ENCODE measurements at regions of chr5 and their contacts with region 1.

Region 1: DNA sequence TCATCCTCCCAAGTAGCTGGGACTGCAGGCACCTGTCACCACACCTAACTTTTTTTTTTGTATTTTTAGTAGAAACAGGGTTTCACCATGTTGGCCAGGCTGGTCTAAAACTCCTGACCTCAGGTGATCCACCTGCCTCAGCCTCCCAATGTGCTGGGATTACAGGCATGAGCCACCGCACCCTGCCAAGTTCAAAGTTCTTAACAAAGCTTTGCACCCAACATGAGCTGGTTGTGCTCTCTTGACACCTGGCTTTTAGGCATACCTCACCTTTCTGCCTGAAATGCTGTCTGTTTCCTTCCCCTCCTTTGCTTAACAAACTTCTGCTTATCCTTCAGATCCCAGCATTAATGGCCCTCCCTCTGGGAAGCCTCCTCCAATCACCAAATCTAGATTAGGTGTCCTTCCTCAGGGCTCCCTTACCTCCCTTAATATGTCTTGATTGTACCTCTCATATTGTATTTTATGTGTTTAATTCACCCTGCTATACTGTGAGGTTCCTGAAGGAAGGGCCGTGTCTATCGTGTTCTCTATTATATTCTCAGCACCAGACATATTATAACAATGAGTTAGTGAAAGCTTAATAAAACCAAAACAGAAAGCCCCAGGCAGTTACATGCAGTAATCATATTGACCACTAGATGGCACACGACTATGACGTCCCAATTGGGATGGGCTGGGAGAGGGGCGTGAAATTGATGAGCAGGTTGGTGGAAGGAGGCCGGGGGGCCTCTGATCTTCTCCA is 62.9 kb upstream of the PPARGC1B start:
- DNase-seq: peak; percentile 38
- ATAC-seq: peak; percentile 90
- H3K4me3 ChIP-seq: no peak overlapping the region
- H3K27ac ChIP-seq: no peak overlapping the region
- H3K4me1 ChIP-seq: no peaks in the 10 kb centered on the region
- H3K27me3 ChIP-seq: no peaks in the 10 kb centered on the region; a peak in 1 of 4 replicates
- CTCF ChIP-seq: peak; percentile 74 to 95 (median 83)
- EP300 ChIP-seq: no peak
- POLR2A ChIP-seq: no peak
- RAD21 ChIP-seq: peak; percentile 75

Region 2: GRCh38 chr5:147835386-147835798 is 1831.9 kb before region 1 on chr5:
- CTCF ChIA-PET with region 1: no interaction called
- POLR2A ChIA-PET with region 1: no interaction called
- RAD21 ChIA-PET with region 1: no interaction called
- SMC1A ChIA-PET with region 1: no interaction called
- in situ Hi-C with region 1: no loop called
- intact Hi-C with region 1: no loop called
- DNase-seq: no peak
- ATAC-seq: no peak
- H3K4me3 ChIP-seq: no peak overlapping the region
- H3K27ac ChIP-seq: no peak overlapping the region
- H3K4me1 ChIP-seq: no peaks in the 10 kb centered on the region
- H3K27me3 ChIP-seq: no peaks in the 10 kb centered on the region; a peak in 1 of 4 replicates
- CTCF ChIP-seq: no peak
- EP300 ChIP-seq: no peak
- POLR2A ChIP-seq: no peak
- RAD21 ChIP-seq: no peak

Region 3: GRCh38 chr5:149680810-149681221 is 13.6 kb after region 1 on chr5:
- CTCF ChIA-PET with region 1: interaction called, 65 read pairs
- POLR2A ChIA-PET with region 1: interaction called, 3 read pairs
- RAD21 ChIA-PET with region 1: interaction called, 14 read pairs
- SMC1A ChIA-PET with region 1: interaction called, 32 read pairs
- in situ Hi-C with region 1: no loop called
- intact Hi-C with region 1: no loop called
- DNase-seq: peak; percentile 84
- ATAC-seq: peak; percentile 99
- H3K4me3 ChIP-seq: no peak overlapping the region
- H3K27ac ChIP-seq: peak overlapping the region; percentile 45
- H3K4me1 ChIP-seq: peaks cover 28% of the 10 kb centered on the region
- H3K27me3 ChIP-seq: peaks cover 0 to under 1% of the 10 kb centered on the region in 2 experiments; a peak in 1 of 4 replicates
- CTCF ChIP-seq: no peak
- EP300 ChIP-seq: peak; percentile 32 to 90; a peak in 3 of 4 replicates
- POLR2A ChIP-seq: no peak
- RAD21 ChIP-seq: no peak

Region 4: GRCh38 chr5:149749481-149750365 is 82.5 kb after region 1 on chr5:
- CTCF ChIA-PET with region 1: interaction called, 25 read pairs
- POLR2A ChIA-PET with region 1: interaction called, 4 read pairs
- RAD21 ChIA-PET with region 1: no interaction called
- SMC1A ChIA-PET with region 1: interaction called, 5 read pairs
- in situ Hi-C with region 1: no loop called
- intact Hi-C with region 1: no loop called
- DNase-seq: no peak
- ATAC-seq: no peak
- H3K4me3 ChIP-seq: no peak overlapping the region
- H3K27ac ChIP-seq: no peak overlapping the region
- H3K4me1 ChIP-seq: peaks cover 14% of the 10 kb centered on the region
- H3K27me3 ChIP-seq: no peaks in the 10 kb centered on the region
- CTCF ChIP-seq: no peak
- EP300 ChIP-seq: no peak
- POLR2A ChIP-seq: no peak
- RAD21 ChIP-seq: no peak

Region 5: DNA sequence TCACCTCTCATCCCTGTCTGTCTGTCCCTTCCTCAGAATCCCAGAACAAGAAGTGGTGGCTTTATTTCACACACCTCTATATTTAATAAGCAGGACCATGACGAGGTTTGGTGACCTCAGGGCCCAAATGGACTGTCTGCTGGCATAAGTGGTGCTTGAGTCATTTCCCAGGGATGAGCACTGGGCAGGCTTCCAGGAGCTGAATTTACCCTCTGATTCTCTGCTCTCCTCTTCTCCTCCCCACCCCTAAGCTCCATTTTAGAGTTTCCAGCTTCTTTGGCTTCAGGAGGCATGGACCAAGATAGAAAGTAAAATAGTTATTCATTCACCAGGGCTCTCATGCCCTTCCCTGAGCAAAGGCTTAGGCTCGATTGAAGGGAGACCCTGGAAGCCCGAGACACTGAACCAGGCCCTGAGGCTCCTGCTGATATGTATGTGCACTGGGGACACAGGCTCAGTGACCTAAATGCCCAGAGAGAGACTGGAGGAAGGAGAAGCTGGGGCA is 131.9 kb after region 1 on chr5:
- CTCF ChIA-PET with region 1: interaction called, 5 read pairs
- POLR2A ChIA-PET with region 1: no interaction called
- RAD21 ChIA-PET with region 1: interaction called, 26 read pairs
- SMC1A ChIA-PET with region 1: interaction called, 29 read pairs
- in situ Hi-C with region 1: no loop called
- intact Hi-C with region 1: no loop called
- DNase-seq: no peak
- ATAC-seq: no peak
- H3K4me3 ChIP-seq: no peak overlapping the region
- H3K27ac ChIP-seq: peak overlapping the region; percentile 18; the same call in 1 of the 2 replicates
- H3K4me1 ChIP-seq: peaks cover 31% of the 10 kb centered on the region
- H3K27me3 ChIP-seq: no peaks in the 10 kb centered on the region
- CTCF ChIP-seq: no peak
- EP300 ChIP-seq: no peak
- POLR2A ChIP-seq: no peak
- RAD21 ChIP-seq: no peak

Region 6: DNA sequence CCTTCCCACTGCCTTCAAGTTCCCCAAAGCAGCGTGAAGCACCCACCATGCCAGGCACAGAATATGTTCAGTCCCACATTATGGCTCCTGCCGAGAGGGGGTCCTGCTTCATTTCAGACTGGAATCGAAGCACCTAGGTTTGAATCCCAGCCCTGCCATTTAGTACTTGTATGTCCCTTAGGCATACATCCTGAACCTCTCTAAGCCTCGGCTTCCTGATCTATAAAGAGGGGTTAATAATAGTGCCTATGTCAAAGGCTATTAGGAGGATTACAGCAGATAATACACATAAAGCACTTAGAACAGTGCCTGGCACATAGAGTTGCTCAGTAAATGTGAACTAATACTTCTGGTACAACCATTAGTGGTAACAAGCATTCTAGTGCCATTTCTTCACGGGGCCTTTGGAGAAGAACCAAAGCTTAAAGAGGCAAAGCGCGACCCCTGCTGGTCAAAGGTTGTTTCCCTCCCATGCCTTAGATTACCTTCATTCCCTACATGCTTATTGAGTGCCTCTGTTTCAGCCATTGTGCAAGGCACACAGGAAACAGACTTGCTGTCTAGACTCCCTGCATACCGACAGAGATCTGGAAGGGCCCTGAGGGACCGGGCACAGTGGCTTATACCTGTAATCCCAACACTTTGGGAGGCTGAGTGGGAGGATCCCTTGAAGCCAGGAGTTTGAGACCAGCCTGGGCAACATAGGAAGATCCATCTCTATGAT is 161.1 kb after region 1 on chr5:
- CTCF ChIA-PET with region 1: interaction called, 349 read pairs
- POLR2A ChIA-PET with region 1: interaction called, 18 read pairs
- RAD21 ChIA-PET with region 1: interaction called, 91 read pairs
- SMC1A ChIA-PET with region 1: interaction called, 210 read pairs
- in situ Hi-C with region 1: loop called (anchors 5 kb)
- intact Hi-C with region 1: loop called (anchors 1 kb)
- DNase-seq: peak; percentile 79
- ATAC-seq: peak; percentile 84
- H3K4me3 ChIP-seq: no peak overlapping the region
- H3K27ac ChIP-seq: no peak overlapping the region
- H3K4me1 ChIP-seq: peaks cover 8% of the 10 kb centered on the region
- H3K27me3 ChIP-seq: no peaks in the 10 kb centered on the region
- CTCF ChIP-seq: peak; percentile 78 to 89 (median 83)
- EP300 ChIP-seq: no peak
- POLR2A ChIP-seq: no peak
- RAD21 ChIP-seq: peak; percentile 95